Gastrocnemius medialis (tissue), 4 donors: ENCODE measurements at regions of chr12 and their contacts with region 1.

Region 1: DNA sequence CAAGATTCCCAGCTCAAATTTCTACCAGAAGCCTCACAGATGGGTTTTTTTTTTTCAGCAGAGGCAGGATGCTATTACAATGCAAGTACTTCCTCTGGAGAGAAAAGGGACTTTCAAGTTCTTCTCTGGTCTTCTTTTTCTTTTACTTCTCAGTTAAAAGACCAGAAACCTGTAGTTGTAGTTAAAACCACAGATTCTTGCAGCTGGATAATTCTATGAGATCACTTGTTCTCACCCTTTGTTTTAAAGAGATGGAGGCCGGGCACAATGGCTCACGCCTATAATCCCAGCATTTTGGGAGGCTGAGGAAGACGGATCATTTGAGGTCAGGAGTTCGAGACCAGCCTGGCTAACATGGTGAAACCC is 47.6 kb upstream of the OVCH1 start:
- DNase-seq: no peak
- ATAC-seq: no peak
- H3K4me3 ChIP-seq: no peak overlapping the region
- H3K27ac ChIP-seq: peak overlapping the region in 2 of 4 donors; percentile 76 to 84
- H3K4me1 ChIP-seq: peaks cover 42 to 53% of the 10 kb centered on the region in 2 donors
- H3K27me3 ChIP-seq: no peaks in the 10 kb centered on the region
- CTCF ChIP-seq: no peak
- POLR2A ChIP-seq: no peak

Region 2: DNA sequence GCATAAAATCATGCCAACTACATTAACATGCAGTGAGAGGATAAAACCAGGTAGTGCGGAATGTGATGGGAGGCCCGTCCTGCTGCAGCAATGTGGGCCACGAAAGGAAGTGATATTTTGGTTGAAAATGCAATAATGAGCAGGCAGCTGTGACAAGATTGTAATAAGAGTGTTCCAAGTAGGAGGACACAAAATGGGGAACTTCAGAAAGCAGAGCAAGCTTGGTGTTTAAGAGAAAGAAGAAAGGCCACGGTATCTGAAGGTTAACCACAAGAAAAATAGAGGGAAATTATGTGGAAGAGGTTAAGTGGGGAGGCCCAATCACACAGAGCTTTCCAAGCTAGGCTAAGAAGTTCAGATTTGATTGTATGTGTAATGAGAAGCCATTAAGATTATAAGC is 81.9 kb before region 1 on chr12:
- in situ Hi-C with region 1: no loop called
- intact Hi-C with region 1: no loop called
- DNase-seq: no peak
- ATAC-seq: no peak
- H3K4me3 ChIP-seq: no peak overlapping the region
- H3K27ac ChIP-seq: no peak overlapping the region
- H3K4me1 ChIP-seq: no peaks in the 10 kb centered on the region
- H3K27me3 ChIP-seq: no peaks in the 10 kb centered on the region
- CTCF ChIP-seq: no peak
- POLR2A ChIP-seq: no peak

Region 3: DNA sequence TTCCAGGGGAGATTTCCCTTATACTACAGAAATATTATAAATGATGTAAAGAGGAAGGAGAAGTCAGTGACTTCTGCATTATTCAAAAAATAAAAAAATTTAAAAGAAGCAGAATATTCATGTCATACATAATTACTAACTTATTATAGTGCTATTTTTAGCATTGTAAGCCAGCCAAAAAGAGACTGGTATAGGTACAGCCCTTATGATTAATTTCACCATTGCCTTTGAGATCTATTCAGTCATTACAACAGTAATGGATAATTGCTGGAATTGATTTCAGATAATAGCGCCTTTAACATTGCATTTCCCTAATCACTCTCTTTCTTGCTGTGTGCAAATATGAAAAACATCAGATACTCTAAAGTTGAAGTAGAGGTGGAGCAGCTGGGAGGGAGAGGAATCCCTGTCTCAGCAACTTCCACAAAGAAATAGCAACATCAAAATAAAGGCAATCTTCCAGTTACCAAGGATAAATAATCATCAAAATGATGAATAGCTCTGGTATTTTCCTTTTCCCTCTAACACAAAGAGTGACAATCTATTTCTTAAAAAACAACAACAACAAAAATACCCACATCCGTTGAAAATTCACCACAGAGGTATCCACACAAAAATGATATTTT is 24.2 kb after region 1 on chr12:
- in situ Hi-C with region 1: no loop called
- intact Hi-C with region 1: no loop called
- DNase-seq: no peak
- ATAC-seq: no peak
- H3K4me3 ChIP-seq: no peak overlapping the region
- H3K27ac ChIP-seq: peak overlapping the region; percentile 20 to 61 (median 38)
- H3K4me1 ChIP-seq: peaks cover 6 to 19% of the 10 kb centered on the region in 2 donors
- H3K27me3 ChIP-seq: no peaks in the 10 kb centered on the region
- CTCF ChIP-seq: no peak
- POLR2A ChIP-seq: no peak

Region 4: DNA sequence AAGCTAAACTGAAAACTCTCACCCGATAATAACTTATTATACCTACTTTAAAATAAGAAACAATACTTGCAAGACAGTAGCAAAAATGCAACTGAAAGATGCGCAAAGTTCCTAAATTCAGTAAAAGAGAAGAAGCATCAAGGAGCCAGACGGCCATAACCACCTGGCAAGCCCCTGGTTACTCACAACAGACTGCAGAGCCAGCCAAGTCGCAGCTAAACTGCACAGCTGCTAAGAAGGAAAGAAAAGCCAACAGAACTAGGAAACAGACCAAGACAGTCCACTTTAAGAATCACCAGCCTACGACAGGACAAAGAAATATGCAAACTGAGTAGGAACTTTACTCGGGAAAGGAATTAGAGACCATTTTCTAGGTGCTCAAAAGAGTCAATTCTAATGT is 110.8 kb after region 1 on chr12:
- in situ Hi-C with region 1: no loop called
- intact Hi-C with region 1: loop called (anchors 5 kb)
- DNase-seq: peak in 1 of 2 donors; percentile 24
- ATAC-seq: peak; percentile 43 to 53
- H3K4me3 ChIP-seq: no peak overlapping the region
- H3K27ac ChIP-seq: peak overlapping the region in 3 of 4 donors; percentile 30 to 75 (median 68)
- H3K4me1 ChIP-seq: peaks cover 29 to 34% of the 10 kb centered on the region in 2 donors
- H3K27me3 ChIP-seq: no peaks in the 10 kb centered on the region
- CTCF ChIP-seq: no peak
- POLR2A ChIP-seq: no peak

Region 5: DNA sequence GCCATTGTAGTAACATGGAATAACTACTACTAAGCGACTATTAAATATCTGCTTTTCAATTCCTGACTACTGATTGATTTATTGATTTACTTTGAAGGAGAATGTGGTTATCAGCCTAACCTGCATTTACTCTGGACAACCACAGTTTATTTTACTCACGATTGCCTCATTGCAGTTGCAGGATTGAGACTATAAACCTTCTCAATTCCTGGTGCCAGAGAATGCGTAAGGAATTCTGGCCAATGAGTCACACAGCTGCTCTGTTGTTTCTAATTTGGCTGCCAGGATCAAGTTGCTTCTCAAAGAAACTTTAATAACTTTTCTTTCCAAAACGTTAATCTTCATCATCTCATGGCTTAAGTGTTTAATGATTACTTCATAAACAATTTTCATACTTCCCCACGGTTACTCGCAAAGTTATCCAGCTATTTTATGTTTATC is 251.8 kb after region 1 on chr12:
- in situ Hi-C with region 1: no loop called
- intact Hi-C with region 1: loop called (anchors 5 kb)
- DNase-seq: peak; percentile 45 to 65
- ATAC-seq: peak; percentile 99 to 100
- H3K4me3 ChIP-seq: peak overlapping the region in 2 of 4 donors; percentile 26 to 30
- H3K27ac ChIP-seq: peak overlapping the region; percentile 29 to 71 (median 40)
- H3K4me1 ChIP-seq: peaks cover 19 to 22% of the 10 kb centered on the region in 2 donors
- H3K27me3 ChIP-seq: no peaks in the 10 kb centered on the region
- CTCF ChIP-seq: peak in 2 of 5 experiments; percentile 14 to 36
- POLR2A ChIP-seq: no peak